Activated CD4-positive, alpha-beta T cell treated with anti-CD3 and anti-CD28 coated beads for 36 hours (primary cell): ENCODE measurements at regions of chr4 and their contacts with region 1.

Region 1: GRCh38 chr4:155787113-155787710 is 28.4 kb downstream of the GUCY1B1 start:
- DNase-seq: peak; percentile 10
- ATAC-seq: peak; percentile 82
- H3K4me3 Mint-ChIP-seq: no peak overlapping the region
- H3K27ac Mint-ChIP-seq: no peak overlapping the region
- H3K4me1 Mint-ChIP-seq: no peaks in the 10 kb centered on the region
- H3K27me3 Mint-ChIP-seq: peaks cover 9% of the 10 kb centered on the region

Region 2: DNA sequence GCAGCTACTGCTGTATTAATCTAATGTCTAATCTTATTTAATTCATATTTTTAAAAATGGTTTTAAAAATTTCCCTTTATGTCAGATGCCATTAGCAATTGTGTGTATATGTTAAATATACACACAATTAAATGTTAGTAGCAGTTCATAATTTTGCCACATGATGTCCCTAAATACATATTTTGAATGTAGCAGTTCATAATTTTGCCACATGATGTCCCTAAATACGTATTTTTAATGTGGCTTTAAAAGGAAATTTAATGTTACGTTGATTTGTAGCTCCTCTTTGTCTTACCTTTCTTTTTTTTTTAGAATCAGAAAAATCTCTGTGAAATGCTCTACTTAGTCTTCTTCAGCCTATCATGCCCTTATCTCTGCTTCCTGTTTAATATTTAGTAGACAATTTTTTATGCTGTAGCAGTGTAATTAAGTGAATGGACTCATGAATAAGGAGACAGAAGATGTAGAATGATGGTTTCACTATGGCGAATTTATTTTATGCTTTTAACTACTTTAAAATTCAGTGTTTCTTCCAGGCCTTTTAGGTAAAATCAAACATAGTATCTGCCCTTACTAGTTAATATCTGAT is 980.1 kb before region 1 on chr4:
- CTCF ChIA-PET with region 1: no interaction called
- POLR2A ChIA-PET with region 1: no interaction called
- intact Hi-C with region 1: loop called (anchors 2 to 5 kb)
- DNase-seq: no peak
- ATAC-seq: no peak
- H3K4me3 Mint-ChIP-seq: no peak overlapping the region
- H3K27ac Mint-ChIP-seq: no peak overlapping the region
- H3K4me1 Mint-ChIP-seq: no peaks in the 10 kb centered on the region
- H3K27me3 Mint-ChIP-seq: peaks cover 3% of the 10 kb centered on the region

Region 3: DNA sequence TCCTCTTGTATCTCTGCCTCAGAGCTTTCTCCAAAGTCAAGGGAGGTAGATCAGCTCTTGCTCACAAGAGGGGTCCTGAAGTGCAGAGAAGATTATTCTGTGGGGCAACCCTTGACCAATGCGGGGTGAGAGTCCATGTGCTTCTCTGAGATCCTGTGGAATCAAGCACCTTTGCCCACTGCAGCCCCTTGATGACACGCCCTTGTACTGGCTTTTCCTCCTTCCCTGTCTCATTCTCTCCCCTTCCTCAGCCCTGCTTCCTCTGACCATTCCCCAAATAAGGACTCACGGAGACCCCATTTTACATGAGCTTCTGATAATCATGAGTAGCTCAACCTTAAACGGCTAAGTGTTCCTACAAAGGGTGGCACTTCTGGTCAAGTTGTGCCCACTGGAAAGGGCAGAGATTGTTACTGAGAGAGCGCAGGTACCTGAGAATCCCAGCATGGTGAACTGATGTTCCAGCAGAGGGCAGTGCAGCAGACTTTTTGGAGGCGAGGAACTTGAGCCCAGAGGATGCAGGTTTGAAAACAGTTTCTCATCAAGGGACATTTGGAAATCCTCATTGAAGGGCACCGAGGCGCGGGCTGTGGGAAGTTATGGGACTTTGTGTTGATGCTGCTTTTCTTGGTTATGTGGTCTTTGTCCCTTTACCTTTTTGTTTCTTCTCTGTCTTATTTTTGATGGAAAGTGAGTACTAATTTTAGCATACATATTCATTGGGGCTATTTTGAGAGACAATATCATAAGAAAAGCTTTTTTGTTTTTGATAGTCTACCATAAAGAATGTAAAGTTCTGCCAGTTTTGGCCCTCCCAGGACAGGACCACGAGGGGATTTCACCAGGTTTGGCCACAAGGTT is 804.8 kb before region 1 on chr4:
- CTCF ChIA-PET with region 1: no interaction called
- POLR2A ChIA-PET with region 1: no interaction called
- intact Hi-C with region 1: loop called in 1 of 2 experiments (anchors 5 kb)
- DNase-seq: peak; percentile 71
- ATAC-seq: peak; percentile 49
- H3K4me3 Mint-ChIP-seq: no peak overlapping the region
- H3K27ac Mint-ChIP-seq: no peak overlapping the region
- H3K4me1 Mint-ChIP-seq: no peaks in the 10 kb centered on the region
- H3K27me3 Mint-ChIP-seq: peaks cover 2% of the 10 kb centered on the region

Region 4: DNA sequence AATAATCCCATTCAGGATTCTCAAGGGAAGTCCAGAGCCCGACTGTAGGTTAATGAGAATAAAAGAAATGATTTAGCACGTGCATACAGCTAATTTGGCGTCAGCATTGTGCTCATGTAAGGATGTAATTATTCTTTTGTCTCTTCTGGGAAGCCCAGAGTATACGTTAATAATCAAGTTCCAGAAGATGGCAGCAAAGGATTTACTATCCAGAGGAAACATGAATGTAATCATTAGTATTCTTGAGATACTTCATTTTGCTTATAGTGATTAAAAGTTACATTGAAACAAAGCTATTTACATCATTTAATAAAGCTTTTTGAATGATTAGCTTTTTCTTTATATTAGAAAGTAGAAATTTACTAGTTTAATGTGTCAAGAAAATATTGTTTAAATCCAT is 383.3 kb before region 1 on chr4:
- CTCF ChIA-PET with region 1: interaction called, 3 read pairs
- POLR2A ChIA-PET with region 1: no interaction called
- intact Hi-C with region 1: loop called in 1 of 2 experiments (anchors 5 kb)
- DNase-seq: no peak
- ATAC-seq: no peak
- H3K4me3 Mint-ChIP-seq: no peak overlapping the region
- H3K27ac Mint-ChIP-seq: no peak overlapping the region
- H3K4me1 Mint-ChIP-seq: no peaks in the 10 kb centered on the region
- H3K27me3 Mint-ChIP-seq: peaks cover 10% of the 10 kb centered on the region

Region 5: GRCh38 chr4:155442267-155443105 is 344.7 kb before region 1 on chr4:
- CTCF ChIA-PET with region 1: interaction called, 9 read pairs
- POLR2A ChIA-PET with region 1: no interaction called
- intact Hi-C with region 1: loop called (anchors 1 kb)
- DNase-seq: peak; percentile 77
- ATAC-seq: peak; percentile 66
- H3K4me3 Mint-ChIP-seq: no peak overlapping the region
- H3K27ac Mint-ChIP-seq: no peak overlapping the region
- H3K4me1 Mint-ChIP-seq: no peaks in the 10 kb centered on the region
- H3K27me3 Mint-ChIP-seq: peaks cover 11% of the 10 kb centered on the region

Region 6: DNA sequence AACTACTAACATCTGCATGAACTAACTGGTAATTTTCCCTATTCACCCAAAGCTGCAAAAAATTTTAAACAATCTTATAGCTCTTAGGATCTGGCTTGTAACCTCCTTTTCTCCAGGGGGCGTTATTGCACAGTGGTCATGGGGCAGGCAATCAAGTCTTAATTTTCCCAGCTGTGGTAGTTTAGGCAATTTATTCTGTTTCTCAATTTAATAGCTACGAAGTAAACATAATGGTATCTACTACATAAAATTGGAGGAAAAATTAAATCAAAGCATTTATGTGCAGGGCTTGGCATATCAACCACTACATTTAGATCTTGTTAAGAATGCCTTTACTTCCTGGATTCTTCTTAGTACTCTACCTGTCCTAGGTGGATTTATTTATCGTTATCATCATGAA is 257.9 kb before region 1 on chr4:
- CTCF ChIA-PET with region 1: no interaction called
- POLR2A ChIA-PET with region 1: no interaction called
- intact Hi-C with region 1: loop called (anchors 1 to 10 kb)
- DNase-seq: peak; percentile 13
- ATAC-seq: no peak
- H3K4me3 Mint-ChIP-seq: no peak overlapping the region
- H3K27ac Mint-ChIP-seq: no peak overlapping the region
- H3K4me1 Mint-ChIP-seq: no peaks in the 10 kb centered on the region
- H3K27me3 Mint-ChIP-seq: no peaks in the 10 kb centered on the region